ENCODE measurements at regions of chr12 and their contacts with region 1.

Region 1: DNA sequence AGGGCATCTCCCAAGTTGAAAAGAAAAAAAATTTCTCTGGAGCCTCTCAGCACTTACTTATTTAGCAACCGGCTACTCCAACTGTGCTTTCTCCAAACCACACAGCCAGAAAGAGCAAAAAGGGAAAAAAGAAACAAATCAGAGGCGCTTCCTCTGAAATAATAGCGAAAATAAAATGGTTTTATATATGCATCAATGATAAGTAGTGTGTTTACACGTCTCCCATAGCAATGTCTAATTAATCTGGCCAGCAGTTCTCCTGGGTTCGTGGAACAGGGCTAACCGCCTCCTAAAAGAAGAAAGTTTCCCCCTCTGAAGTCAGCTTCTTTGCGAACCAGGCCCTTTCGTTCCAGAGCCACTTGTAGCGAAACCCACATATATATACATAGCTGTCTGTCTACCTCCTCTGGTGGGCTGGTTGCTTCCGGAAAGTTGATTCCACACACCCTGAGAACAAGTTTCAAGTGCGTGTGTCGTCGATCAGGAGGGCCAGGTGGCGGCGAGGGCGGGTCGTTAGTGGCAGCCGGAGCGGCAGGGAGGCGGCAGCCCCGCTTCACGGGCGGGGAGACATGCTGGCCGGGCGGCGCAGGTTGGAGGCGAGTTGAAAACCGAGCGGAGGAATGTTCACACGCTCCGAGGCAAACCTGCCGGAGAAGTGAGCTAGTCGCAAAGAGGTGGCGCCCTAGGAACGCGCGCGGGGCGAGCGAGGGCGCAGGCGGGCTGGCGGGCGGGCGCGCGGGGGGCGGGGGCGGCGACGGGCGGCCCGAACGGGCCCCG is 2.7 kb downstream of the PTHLH start:
- DNase-seq: no peak
- H3K4me3 Mint-ChIP-seq: peak overlapping the region; percentile 72
- H3K27ac Mint-ChIP-seq: peak overlapping the region; percentile 53
- H3K4me1 Mint-ChIP-seq: peaks cover 20% of the 10 kb centered on the region
- H3K27me3 Mint-ChIP-seq: peaks cover 89% of the 10 kb centered on the region

Region 2: DNA sequence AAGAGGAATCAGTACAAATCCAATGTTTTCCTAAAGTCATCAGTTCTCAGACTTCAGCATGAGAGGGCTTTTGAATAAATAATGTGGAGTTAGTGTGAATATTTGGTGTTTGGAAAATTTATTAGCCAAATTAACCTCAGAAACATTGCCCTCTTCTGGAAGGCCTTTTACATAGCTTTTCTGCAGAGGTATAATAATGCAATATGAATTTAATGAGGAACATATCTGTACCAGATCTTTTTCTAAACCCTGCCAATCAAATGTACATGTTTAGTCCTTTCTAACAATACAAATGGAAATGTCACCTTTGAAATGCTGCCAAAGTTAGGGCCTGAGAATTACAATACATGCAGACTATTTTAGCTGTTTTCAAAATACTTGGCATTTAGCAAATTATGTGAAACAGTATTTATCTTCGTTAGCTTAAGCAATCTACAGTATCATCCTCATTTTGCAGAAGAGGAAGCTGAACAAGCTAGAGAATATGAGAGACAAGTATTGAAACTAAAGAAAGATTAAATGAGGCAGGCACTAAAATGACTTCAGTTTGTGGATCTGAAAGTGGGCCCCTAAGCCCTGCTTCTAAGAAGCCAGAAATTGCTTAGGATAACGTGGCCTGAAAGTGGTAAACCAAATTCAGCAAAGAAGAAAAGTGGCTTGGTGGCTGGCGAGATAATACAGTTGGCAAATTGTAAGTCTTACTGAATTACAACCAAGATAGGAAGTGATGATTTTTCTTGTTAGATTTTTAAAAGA is 129.4 kb before region 1 on chr12:
- intact Hi-C with region 1: no loop called
- DNase-seq: no peak
- H3K4me3 Mint-ChIP-seq: no peak overlapping the region
- H3K27ac Mint-ChIP-seq: no peak overlapping the region
- H3K4me1 Mint-ChIP-seq: no peaks in the 10 kb centered on the region
- H3K27me3 Mint-ChIP-seq: no peaks in the 10 kb centered on the region

Region 3: DNA sequence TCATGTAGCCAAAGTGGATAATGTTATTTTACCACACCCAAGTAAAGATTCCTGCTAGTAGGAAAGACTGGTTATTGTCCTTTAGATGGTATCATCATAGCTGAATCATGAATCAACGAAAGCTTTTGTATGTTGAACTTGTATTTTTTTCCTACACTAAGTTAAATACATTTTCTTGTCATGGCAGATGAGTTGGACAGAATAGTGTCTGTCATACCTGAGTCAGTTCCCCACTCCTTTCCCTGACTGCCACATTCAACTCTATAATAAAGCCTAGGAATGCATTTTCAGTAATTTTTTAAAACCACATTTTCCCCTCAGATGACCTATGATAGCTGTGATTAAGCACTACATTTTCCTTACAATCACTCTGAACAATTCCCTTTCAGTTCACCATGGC is 12.1 kb after region 1 on chr12:
- intact Hi-C with region 1: loop called (anchors 2 kb)
- DNase-seq: no peak
- H3K4me3 Mint-ChIP-seq: no peak overlapping the region
- H3K27ac Mint-ChIP-seq: no peak overlapping the region
- H3K4me1 Mint-ChIP-seq: no peaks in the 10 kb centered on the region
- H3K27me3 Mint-ChIP-seq: peaks cover 30% of the 10 kb centered on the region

Region 4: GRCh38 chr12:28497889-28498411 is 528.1 kb after region 1 on chr12:
- intact Hi-C with region 1: no loop called
- DNase-seq: no peak
- H3K4me3 Mint-ChIP-seq: no peak overlapping the region
- H3K27ac Mint-ChIP-seq: no peak overlapping the region
- H3K4me1 Mint-ChIP-seq: peaks cover 12% of the 10 kb centered on the region
- H3K27me3 Mint-ChIP-seq: no peaks in the 10 kb centered on the region

Region 5: DNA sequence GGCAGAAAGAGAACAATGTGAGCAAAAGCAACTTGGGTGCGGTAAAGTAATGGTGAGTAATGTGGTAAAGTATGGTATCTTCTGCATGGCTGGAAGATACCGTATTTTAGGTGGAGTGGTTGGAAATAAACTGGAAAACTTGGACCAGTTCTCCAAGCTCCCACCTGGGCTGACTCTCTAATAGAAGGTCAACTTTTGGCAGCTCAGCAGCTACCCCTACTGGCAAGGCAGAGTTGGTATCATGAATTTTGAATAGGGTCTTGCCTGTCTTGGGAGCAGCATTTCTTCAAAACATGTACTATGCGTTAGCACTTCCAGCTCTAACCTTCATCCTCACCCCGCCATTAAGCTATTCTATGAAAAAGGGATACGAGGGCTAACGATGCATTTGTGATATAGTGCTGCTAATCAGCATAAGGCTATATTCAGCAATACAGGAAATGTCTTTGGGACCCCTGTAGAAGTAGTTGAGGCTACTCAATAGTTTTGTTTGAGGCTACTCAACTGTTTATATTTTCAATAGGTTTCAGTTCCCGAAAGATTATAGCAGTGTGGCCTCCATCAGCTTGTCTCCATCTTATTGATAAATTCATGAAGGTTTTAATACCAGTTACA is 902.9 kb after region 1 on chr12:
- intact Hi-C with region 1: loop called (anchors 5 kb)
- DNase-seq: no peak
- H3K4me3 Mint-ChIP-seq: no peak overlapping the region
- H3K27ac Mint-ChIP-seq: no peak overlapping the region
- H3K4me1 Mint-ChIP-seq: no peaks in the 10 kb centered on the region
- H3K27me3 Mint-ChIP-seq: no peaks in the 10 kb centered on the region